MCF 10A (cell line): ENCODE measurements at regions of chr5 and their contacts with region 1.

Region 1: GRCh38 chr5:8756498-8757084 is 789.3 kb downstream of the SEMA5A start:
- DNase-seq: peak; percentile 55
- H3K4me3 Mint-ChIP-seq: no peak overlapping the region
- H3K27ac Mint-ChIP-seq: no peak overlapping the region
- H3K4me1 Mint-ChIP-seq: no peaks in the 10 kb centered on the region
- H3K27me3 Mint-ChIP-seq: no peaks in the 10 kb centered on the region
- CTCF ChIP-seq: peak; percentile 64

Region 2: DNA sequence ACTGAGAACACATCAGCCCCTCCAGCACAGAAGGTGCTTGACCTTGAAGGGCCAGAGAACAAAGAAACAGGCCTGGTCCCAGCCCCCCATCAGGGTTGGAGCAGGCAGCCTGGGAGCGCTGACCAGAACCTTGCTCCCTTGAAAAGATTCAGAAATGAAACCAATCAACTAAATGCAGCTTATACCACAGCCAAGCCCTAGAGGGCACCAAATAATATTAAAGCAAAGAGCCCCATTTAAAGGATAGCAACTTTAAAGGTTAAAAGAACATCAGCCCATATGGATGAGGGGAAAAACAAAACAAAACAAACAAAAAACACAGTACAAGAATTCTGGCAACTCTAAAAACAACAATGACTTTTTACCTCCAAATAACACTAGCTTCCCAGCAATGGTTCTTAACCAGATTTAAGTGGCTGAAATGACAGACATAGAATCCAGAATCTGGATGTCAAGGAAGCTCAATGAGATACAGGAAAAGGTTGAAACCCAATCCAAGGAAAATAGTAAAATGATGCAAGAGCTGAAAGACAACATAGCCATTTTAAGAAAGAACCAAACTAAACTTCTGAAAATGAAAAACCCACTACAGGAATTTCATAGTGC is 415.7 kb before region 1 on chr5:
- CTCF ChIA-PET with region 1: no interaction called
- POLR2A ChIA-PET with region 1: no interaction called
- intact Hi-C with region 1: loop called (anchors 5 kb)
- DNase-seq: peak; percentile 22
- H3K4me3 Mint-ChIP-seq: peak overlapping the region; percentile 38
- H3K27ac Mint-ChIP-seq: no peak overlapping the region
- H3K4me1 Mint-ChIP-seq: peaks cover 9% of the 10 kb centered on the region
- H3K27me3 Mint-ChIP-seq: no peaks in the 10 kb centered on the region
- CTCF ChIP-seq: peak; percentile 54

Region 3: DNA sequence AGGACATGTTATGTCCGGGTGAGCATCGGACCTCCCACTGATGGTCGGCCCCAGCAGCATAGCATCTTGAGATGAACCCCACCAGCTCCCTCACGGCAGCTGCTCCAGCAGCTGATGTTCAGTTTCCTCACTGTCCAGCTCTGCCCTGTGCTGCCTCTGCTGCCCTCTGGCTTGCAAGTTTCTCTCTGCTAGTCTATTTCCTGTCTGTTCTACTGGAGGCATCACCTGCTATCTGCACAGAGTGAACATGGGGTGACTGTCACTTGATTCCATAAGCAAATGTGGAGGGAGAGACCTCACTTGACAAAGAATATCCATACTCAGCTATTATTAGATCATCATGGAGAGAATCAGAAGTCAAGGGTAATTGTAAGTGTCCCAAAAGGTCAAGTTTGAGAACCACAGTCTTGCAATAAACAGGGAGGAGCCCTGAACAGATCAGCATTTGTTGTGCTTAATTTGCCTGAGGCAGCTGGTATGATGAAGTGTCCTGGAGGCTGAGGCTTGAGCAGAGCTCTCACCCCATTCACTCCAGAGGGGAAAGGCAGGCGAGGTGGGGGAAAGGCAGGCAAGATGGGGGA is 86.5 kb after region 1 on chr5:
- CTCF ChIA-PET with region 1: interaction called, 11 read pairs
- POLR2A ChIA-PET with region 1: no interaction called
- intact Hi-C with region 1: loop called (anchors 1 kb)
- DNase-seq: peak; percentile 47
- H3K4me3 Mint-ChIP-seq: no peak overlapping the region
- H3K27ac Mint-ChIP-seq: no peak overlapping the region
- H3K4me1 Mint-ChIP-seq: peaks cover 13% of the 10 kb centered on the region
- H3K27me3 Mint-ChIP-seq: no peaks in the 10 kb centered on the region
- CTCF ChIP-seq: peak; percentile 27

Region 4: GRCh38 chr5:8961956-8962355 is 205.4 kb after region 1 on chr5:
- CTCF ChIA-PET with region 1: no interaction called
- POLR2A ChIA-PET with region 1: no interaction called
- intact Hi-C with region 1: no loop called
- DNase-seq: no peak
- H3K4me3 Mint-ChIP-seq: no peak overlapping the region
- H3K27ac Mint-ChIP-seq: no peak overlapping the region
- H3K4me1 Mint-ChIP-seq: no peaks in the 10 kb centered on the region
- H3K27me3 Mint-ChIP-seq: no peaks in the 10 kb centered on the region
- CTCF ChIP-seq: no peak

Region 5: GRCh38 chr5:9104571-9105339 is 348.2 kb after region 1 on chr5:
- CTCF ChIA-PET with region 1: no interaction called
- POLR2A ChIA-PET with region 1: no interaction called
- intact Hi-C with region 1: no loop called
- DNase-seq: peak; percentile 35
- H3K4me3 Mint-ChIP-seq: no peak overlapping the region
- H3K27ac Mint-ChIP-seq: no peak overlapping the region
- H3K4me1 Mint-ChIP-seq: peaks cover 8% of the 10 kb centered on the region
- H3K27me3 Mint-ChIP-seq: no peaks in the 10 kb centered on the region
- CTCF ChIP-seq: no peak

Region 6: GRCh38 chr5:9197881-9198260 is 441.3 kb after region 1 on chr5:
- CTCF ChIA-PET with region 1: interaction called, 4 read pairs
- POLR2A ChIA-PET with region 1: no interaction called
- intact Hi-C with region 1: loop called (anchors 1 kb)
- DNase-seq: no peak
- H3K4me3 Mint-ChIP-seq: no peak overlapping the region
- H3K27ac Mint-ChIP-seq: no peak overlapping the region
- H3K4me1 Mint-ChIP-seq: peaks cover 9% of the 10 kb centered on the region
- H3K27me3 Mint-ChIP-seq: no peaks in the 10 kb centered on the region
- CTCF ChIP-seq: no peak